Activated CD8-positive, alpha-beta T cell treated with anti-CD3 and anti-CD28 coated beads for 36 hours (primary cell): ENCODE measurements at regions of chr1 and their contacts with region 1.

Region 1: DNA sequence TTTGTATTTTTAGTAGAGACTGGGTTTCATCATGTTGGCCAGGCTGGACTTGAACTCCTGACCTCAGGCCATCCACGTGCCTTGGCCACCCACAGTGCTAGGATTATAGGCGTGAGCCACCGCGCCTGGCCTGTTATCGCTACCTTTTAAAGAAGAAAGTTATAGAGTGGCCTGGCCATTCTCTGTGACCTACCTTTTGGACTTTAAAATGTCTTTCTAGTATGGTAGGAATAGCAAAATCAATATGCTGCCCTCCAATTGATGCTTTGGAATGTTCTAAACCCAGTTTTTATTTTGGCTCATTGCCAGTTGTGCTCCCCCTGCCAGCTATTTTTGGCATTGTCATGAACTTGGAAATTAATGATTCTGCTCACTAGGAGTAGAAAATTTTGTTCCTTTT is 19.9 kb downstream of the HIPK1 start:
- DNase-seq: no peak
- ATAC-seq: no peak
- H3K4me3 Mint-ChIP-seq: no peak overlapping the region
- H3K27ac Mint-ChIP-seq: peak overlapping the region; percentile 88
- H3K4me1 Mint-ChIP-seq: peaks cover 74% of the 10 kb centered on the region
- H3K27me3 Mint-ChIP-seq: no peaks in the 10 kb centered on the region
- CTCF ChIP-seq: peak; percentile 43

Region 2: DNA sequence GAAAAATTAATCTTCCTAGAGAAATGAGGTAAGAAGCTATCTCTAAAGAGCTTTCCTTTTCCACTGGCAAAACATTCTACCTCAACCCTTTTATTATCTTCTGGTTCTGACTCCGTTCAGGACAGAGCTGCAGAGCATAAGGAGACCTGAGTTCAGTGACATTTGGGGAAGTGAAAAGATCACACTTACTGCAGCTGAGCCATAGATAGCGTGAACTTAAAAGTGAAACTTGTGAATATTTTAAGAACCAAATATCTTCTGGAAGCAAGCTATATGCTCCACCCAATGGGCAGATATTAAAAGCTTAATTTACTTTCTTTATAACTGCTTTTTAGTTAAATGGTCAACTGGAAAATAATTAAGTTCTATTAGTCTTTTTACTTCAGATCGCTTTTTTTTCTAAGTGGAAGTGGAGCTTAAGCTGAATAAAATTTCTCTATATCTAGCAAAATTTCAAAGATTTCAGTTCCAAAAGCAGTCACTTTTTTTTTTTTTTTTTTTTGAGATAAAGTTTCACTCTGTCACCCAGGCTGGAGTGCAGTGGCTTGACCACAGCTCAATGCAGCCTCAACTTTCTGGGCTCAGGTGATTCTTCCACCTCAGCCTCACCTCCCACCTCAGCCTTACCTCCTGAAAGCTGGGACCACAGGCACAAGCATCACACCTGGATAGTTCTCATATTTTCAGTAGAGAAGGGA is 89.4 kb before region 1 on chr1:
- CTCF ChIA-PET with region 1: no interaction called
- POLR2A ChIA-PET with region 1: no interaction called
- intact Hi-C with region 1: loop called (anchors 5 kb)
- DNase-seq: no peak
- ATAC-seq: peak; percentile 62
- H3K4me3 Mint-ChIP-seq: no peak overlapping the region
- H3K27ac Mint-ChIP-seq: peak overlapping the region; percentile 74
- H3K4me1 Mint-ChIP-seq: peaks cover 42% of the 10 kb centered on the region
- H3K27me3 Mint-ChIP-seq: no peaks in the 10 kb centered on the region
- CTCF ChIP-seq: no peak

Region 3: GRCh38 chr1:113934511-113935055 is 14.4 kb before region 1 on chr1:
- CTCF ChIA-PET with region 1: interaction called, 57 read pairs
- POLR2A ChIA-PET with region 1: interaction called, 60 read pairs
- intact Hi-C with region 1: loop called (anchors 2 kb)
- DNase-seq: no peak
- ATAC-seq: no peak
- H3K4me3 Mint-ChIP-seq: peak overlapping the region; percentile 90
- H3K27ac Mint-ChIP-seq: peak overlapping the region; percentile 97
- H3K4me1 Mint-ChIP-seq: peaks cover 68% of the 10 kb centered on the region
- H3K27me3 Mint-ChIP-seq: no peaks in the 10 kb centered on the region
- CTCF ChIP-seq: no peak

Region 4: DNA sequence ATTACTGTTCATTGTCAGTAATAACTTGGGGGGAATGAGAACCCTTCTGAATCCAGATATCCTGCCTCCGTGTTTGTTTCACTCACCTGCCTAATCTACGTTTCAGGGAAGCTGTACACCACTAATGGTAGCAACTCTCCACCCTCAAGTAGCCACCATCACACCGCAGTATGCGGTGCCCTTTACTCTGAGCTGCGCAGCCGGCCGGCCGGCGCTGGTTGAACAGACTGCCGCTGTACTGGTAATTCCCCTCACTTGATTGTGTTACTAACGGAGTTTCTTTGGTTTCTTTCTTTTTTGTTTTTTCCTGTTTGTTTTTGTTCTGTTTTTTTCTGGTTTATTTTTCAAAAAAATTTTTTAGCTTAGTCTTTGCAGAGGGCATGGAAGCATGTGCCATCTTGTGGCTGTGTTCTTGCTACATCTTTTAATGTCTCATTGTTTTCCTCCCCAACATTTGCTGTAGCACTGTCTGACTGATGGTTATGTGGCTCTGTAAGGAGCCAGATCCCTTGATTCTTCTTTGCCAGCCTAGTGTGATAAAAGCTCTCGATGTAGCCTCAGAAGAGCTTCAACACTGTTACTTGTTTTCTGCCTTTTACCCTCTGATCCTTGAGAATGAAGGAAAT is 14.4 kb after region 1 on chr1:
- CTCF ChIA-PET with region 1: interaction called, 12 read pairs
- POLR2A ChIA-PET with region 1: interaction called, 3 read pairs
- intact Hi-C with region 1: no loop called
- DNase-seq: no peak
- ATAC-seq: no peak
- H3K4me3 Mint-ChIP-seq: no peak overlapping the region
- H3K27ac Mint-ChIP-seq: peak overlapping the region; percentile 34
- H3K4me1 Mint-ChIP-seq: peaks cover 20% of the 10 kb centered on the region
- H3K27me3 Mint-ChIP-seq: no peaks in the 10 kb centered on the region
- CTCF ChIP-seq: peak; percentile 14

Region 5: DNA sequence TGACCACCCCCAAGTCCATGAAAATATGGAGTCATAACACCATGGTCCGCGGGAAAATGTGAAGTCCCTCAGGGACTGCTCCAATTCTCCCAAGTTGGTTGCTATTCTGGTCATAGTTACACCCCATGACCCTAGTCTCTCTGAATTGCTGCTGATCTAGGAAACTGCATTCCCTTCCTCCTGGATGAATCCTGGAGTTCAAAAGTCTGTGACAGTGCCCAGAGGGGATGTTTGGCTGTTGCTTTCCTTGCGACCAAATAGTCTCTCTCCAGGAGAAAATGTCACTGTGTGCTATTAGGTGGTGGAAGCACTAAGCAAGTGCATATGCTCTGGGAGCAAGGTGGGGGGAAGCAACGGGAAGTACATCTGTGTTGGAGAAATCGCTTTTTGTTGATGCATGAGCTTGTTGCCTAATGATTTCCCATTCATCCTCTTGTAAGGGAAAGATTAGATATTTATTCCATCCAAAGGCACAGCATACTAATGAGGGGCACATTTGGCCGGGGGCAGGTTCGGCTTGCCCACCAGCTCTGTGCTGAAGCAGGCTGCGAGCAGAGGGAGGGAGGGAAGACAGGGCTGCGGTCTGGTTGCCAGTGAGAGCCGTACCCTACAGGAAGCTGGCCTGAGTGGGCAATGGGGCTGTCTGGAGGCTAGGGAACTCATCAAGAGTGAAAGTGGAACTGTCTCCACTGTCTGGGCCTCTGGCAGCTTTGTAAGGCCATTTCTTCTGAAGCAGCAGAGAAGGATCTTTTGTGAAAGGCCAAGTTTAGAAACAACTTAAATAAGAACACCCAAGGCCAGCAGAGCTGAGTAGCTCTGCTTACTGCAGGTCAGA is 177.5 kb after region 1 on chr1:
- CTCF ChIA-PET with region 1: no interaction called
- POLR2A ChIA-PET with region 1: no interaction called
- intact Hi-C with region 1: no loop called
- DNase-seq: no peak
- ATAC-seq: no peak
- H3K4me3 Mint-ChIP-seq: no peak overlapping the region
- H3K27ac Mint-ChIP-seq: no peak overlapping the region
- H3K4me1 Mint-ChIP-seq: peaks cover 9% of the 10 kb centered on the region
- H3K27me3 Mint-ChIP-seq: no peaks in the 10 kb centered on the region
- CTCF ChIP-seq: no peak